ENCODE measurements at regions of chr3 and their contacts with region 1.

Region 1: GRCh38 chr3:187919048-187919447 is 173.8 kb upstream of the BCL6 start:
- DNase-seq: peak; percentile 77
- ATAC-seq: peak; percentile 86
- H3K4me3 ChIP-seq: peak overlapping the region; percentile 11 to 62 (median 44)
- H3K4me3 Mint-ChIP-seq: peak overlapping the region; percentile 90
- H3K27ac ChIP-seq: peak overlapping the region; percentile 45 to 61
- H3K27ac Mint-ChIP-seq: peak overlapping the region; percentile 87
- H3K4me1 ChIP-seq: peaks cover 20 to 22% of the 10 kb centered on the region in 2 donors
- H3K4me1 Mint-ChIP-seq: peaks cover 31% of the 10 kb centered on the region
- H3K27me3 ChIP-seq: peaks cover 0 to 9% (median 2%) of the 10 kb centered on the region in 4 experiments
- H3K27me3 Mint-ChIP-seq: peaks cover 51% of the 10 kb centered on the region
- CTCF ChIP-seq: no peak

Region 2: GRCh38 chr3:187777331-187777941 is 141.6 kb before region 1 on chr3:
- CTCF ChIA-PET with region 1: no interaction called
- POLR2A ChIA-PET with region 1: no interaction called
- intact Hi-C with region 1: loop called (anchors 2 kb)
- DNase-seq: peak; percentile 78
- ATAC-seq: peak; percentile 80
- H3K4me3 ChIP-seq: no peak overlapping the region
- H3K4me3 Mint-ChIP-seq: peak overlapping the region; percentile 62
- H3K27ac ChIP-seq: peak overlapping the region in 1 of 2 donors; percentile 6
- H3K27ac Mint-ChIP-seq: peak overlapping the region; percentile 89
- H3K4me1 ChIP-seq: peaks cover 29 to 35% of the 10 kb centered on the region in 2 donors
- H3K4me1 Mint-ChIP-seq: peaks cover 33% of the 10 kb centered on the region
- H3K27me3 ChIP-seq: no peaks in the 10 kb centered on the region
- H3K27me3 Mint-ChIP-seq: no peaks in the 10 kb centered on the region
- CTCF ChIP-seq: no peak

Region 3: GRCh38 chr3:187935623-187936156 is 16.6 kb after region 1 on chr3:
- CTCF ChIA-PET with region 1: no interaction called
- POLR2A ChIA-PET with region 1: no interaction called
- intact Hi-C with region 1: loop called (anchors 1 kb)
- DNase-seq: peak; percentile 78
- ATAC-seq: peak; percentile 92
- H3K4me3 ChIP-seq: peak overlapping the region in 3 of 5 experiments; percentile 4 to 38 (median 14)
- H3K4me3 Mint-ChIP-seq: peak overlapping the region; percentile 83
- H3K27ac ChIP-seq: peak overlapping the region; percentile 30 to 59
- H3K27ac Mint-ChIP-seq: peak overlapping the region; percentile 91
- H3K4me1 ChIP-seq: peaks cover 20 to 26% of the 10 kb centered on the region in 2 donors
- H3K4me1 Mint-ChIP-seq: peaks cover 38% of the 10 kb centered on the region
- H3K27me3 ChIP-seq: peaks cover 0 to 8% (median 4%) of the 10 kb centered on the region in 4 experiments
- H3K27me3 Mint-ChIP-seq: peaks cover 38% of the 10 kb centered on the region
- CTCF ChIP-seq: no peak

Region 4: DNA sequence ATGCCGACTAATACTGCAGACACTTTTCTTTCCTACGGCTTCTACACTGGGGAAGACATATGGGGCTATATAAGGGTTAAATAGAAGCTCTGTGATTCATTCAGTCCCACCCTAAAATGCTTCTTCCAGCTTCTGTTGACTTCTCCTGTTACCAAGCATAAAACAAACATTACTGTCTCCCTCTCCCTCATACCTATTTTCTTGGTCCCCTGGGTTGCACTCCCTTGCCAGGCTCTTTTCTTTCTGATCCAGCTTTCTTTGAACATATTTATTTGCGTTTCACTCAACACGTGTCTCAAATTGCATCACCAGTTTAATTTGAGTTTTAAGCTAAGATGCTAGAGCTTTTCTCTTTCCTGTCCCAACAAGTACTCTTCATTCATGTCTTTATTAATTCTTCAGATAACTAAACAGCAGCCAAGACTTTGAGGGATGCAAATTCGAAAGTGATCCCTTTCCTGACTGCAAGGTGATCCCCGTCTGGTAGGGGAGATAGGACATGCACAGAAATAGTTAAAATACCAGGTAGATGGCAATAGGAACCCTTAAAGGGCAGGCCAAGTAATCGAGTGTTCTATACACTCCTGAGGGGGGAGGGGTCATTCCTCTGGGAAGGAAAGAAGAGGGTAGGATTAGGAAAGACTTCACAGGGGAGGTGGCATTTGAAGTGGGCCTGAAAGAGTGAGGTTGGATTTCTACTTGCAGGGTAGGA is 24.8 kb after region 1 on chr3:
- CTCF ChIA-PET with region 1: no interaction called
- POLR2A ChIA-PET with region 1: no interaction called
- intact Hi-C with region 1: loop called (anchors 2 kb)
- DNase-seq: no peak
- ATAC-seq: no peak
- H3K4me3 ChIP-seq: no peak overlapping the region
- H3K4me3 Mint-ChIP-seq: no peak overlapping the region
- H3K27ac ChIP-seq: no peak overlapping the region
- H3K27ac Mint-ChIP-seq: no peak overlapping the region
- H3K4me1 ChIP-seq: peaks cover 45 to 54% of the 10 kb centered on the region in 2 donors
- H3K4me1 Mint-ChIP-seq: peaks cover 14% of the 10 kb centered on the region
- H3K27me3 ChIP-seq: peaks cover 0 to 5% (median 0%) of the 10 kb centered on the region in 4 experiments
- H3K27me3 Mint-ChIP-seq: peaks cover 25% of the 10 kb centered on the region
- CTCF ChIP-seq: no peak